Endothelial cell of umbilical vein (primary cell): ENCODE measurements at regions of chr4 and their contacts with region 1.

Region 1: GRCh38 chr4:67746797-67747495 is 7.2 kb downstream of the GNRHR start:
- DNase-seq: peak; percentile 52
- H3K4me3 ChIP-seq: no peak overlapping the region
- H3K27ac ChIP-seq: no peak overlapping the region
- H3K4me1 ChIP-seq: no peaks in the 10 kb centered on the region
- H3K27me3 ChIP-seq: no peaks in the 10 kb centered on the region
- CTCF ChIP-seq: peak; percentile 31 to 38
- POLR2A ChIP-seq: no peak

Region 2: DNA sequence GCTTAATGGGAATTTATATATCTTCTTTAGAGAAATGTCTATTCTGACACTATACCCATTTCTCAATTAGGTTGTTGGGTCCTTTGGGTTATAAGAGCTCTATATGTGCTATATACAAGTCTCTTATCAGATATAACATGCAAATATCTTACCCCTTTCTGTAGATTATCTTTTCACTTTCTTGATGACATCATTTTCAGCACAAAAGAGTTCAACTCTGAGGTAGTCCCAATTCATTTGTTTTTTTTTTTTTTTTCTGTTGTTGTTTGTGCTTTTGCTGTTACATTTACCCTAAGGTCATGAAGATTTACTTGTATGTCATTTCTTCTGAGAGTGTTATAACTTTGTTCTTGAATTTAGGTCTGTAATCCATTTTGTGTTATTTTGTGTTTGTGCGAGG is 528.1 kb before region 1 on chr4:
- CTCF ChIA-PET with region 1: no interaction called
- POLR2A ChIA-PET with region 1: no interaction called
- dilution Hi-C with region 1: no loop called
- intact Hi-C with region 1: no loop called
- DNase-seq: no peak
- H3K4me3 ChIP-seq: no peak overlapping the region
- H3K27ac ChIP-seq: no peak overlapping the region
- H3K4me1 ChIP-seq: no peaks in the 10 kb centered on the region
- H3K27me3 ChIP-seq: no peaks in the 10 kb centered on the region
- CTCF ChIP-seq: no peak
- POLR2A ChIP-seq: no peak

Region 3: GRCh38 chr4:67700738-67701516 is 46.0 kb before region 1 on chr4 and contains the start of gene UBA6:
- CTCF ChIA-PET with region 1: interaction called, 21 read pairs
- POLR2A ChIA-PET with region 1: no interaction called
- dilution Hi-C with region 1: no loop called
- intact Hi-C with region 1: loop called (anchors 2 kb)
- DNase-seq: peak; percentile 94
- H3K4me3 ChIP-seq: peak within 1 kb of the TSS; percentile 66 to 94 (median 84)
- H3K27ac ChIP-seq: peak within 1 kb of the TSS; percentile 93
- H3K4me1 ChIP-seq: peaks cover 21% of the 10 kb centered on the region
- H3K27me3 ChIP-seq: no peaks in the 10 kb centered on the region
- CTCF ChIP-seq: peak; percentile 12 to 37
- POLR2A ChIP-seq: peak; percentile 87
- total RNA-seq, gene UBA6: 96.4 and 97.4 TPM in 2 replicates

Region 4: GRCh38 chr4:67727124-67727850 is 19.7 kb before region 1 on chr4:
- CTCF ChIA-PET with region 1: interaction called, 27 read pairs
- POLR2A ChIA-PET with region 1: no interaction called
- dilution Hi-C with region 1: no loop called
- intact Hi-C with region 1: no loop called
- DNase-seq: peak; percentile 29
- H3K4me3 ChIP-seq: no peak overlapping the region
- H3K27ac ChIP-seq: no peak overlapping the region
- H3K4me1 ChIP-seq: no peaks in the 10 kb centered on the region
- H3K27me3 ChIP-seq: no peaks in the 10 kb centered on the region
- CTCF ChIP-seq: no peak
- POLR2A ChIP-seq: no peak

Region 5: GRCh38 chr4:67762086-67762485 is 15.1 kb after region 1 on chr4:
- CTCF ChIA-PET with region 1: interaction called, 29 read pairs
- POLR2A ChIA-PET with region 1: no interaction called
- dilution Hi-C with region 1: no loop called
- intact Hi-C with region 1: no loop called
- DNase-seq: peak; percentile 5
- H3K4me3 ChIP-seq: no peak overlapping the region
- H3K27ac ChIP-seq: no peak overlapping the region
- H3K4me1 ChIP-seq: no peaks in the 10 kb centered on the region
- H3K27me3 ChIP-seq: no peaks in the 10 kb centered on the region
- CTCF ChIP-seq: no peak
- POLR2A ChIP-seq: no peak

Region 6: GRCh38 chr4:67909905-67910584 is 163.1 kb after region 1 on chr4:
- CTCF ChIA-PET with region 1: interaction called, 24 read pairs
- POLR2A ChIA-PET with region 1: no interaction called
- dilution Hi-C with region 1: no loop called
- intact Hi-C with region 1: loop called (anchors 2 kb)
- DNase-seq: peak; percentile 34
- H3K4me3 ChIP-seq: no peak overlapping the region
- H3K27ac ChIP-seq: no peak overlapping the region
- H3K4me1 ChIP-seq: no peaks in the 10 kb centered on the region
- H3K27me3 ChIP-seq: peaks cover 1 to 6% of the 10 kb centered on the region in 2 experiments
- CTCF ChIP-seq: peak; percentile 30 to 37
- POLR2A ChIP-seq: no peak